ENCODE measurements at regions of chr6 and their contacts with region 1.

Region 1: DNA sequence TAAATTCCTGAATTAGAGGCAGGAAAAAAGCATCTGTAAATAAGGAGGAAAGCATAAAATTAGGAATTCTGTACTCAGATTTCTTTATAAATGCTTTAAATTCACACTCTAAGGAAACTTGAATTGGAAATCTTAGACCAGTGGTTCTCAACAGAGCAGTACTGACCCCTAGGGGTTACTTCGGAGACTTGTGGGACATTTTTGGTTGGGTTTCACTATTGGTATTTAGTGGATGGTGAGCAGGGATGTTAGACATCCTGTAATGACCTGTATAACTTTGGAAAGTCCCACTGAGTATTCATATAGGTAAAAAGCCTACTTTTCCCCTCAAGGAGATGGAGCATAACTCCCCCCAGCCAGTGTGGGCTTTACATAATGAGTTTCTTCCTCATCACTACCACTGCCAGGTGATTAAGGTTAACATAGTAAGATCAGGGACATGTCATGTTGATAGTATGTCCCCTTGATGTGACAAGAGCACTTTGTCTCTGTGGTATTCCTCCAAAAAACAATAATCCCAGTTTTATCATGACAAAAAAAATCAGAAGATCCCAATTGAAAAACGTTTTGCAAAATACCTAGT is 31.0 kb downstream of the GLO1 start:
- DNase-seq: peak in 7 of 9 donors; percentile 19 to 41 (median 32)
- ATAC-seq: peak; percentile 84
- H3K4me3 ChIP-seq: no peak overlapping the region
- H3K4me3 Mint-ChIP-seq: no peak overlapping the region
- H3K27ac ChIP-seq: no peak overlapping the region
- H3K27ac Mint-ChIP-seq: no peak overlapping the region
- H3K4me1 ChIP-seq: peaks cover 0 to 4% of the 10 kb centered on the region in 2 donors
- H3K4me1 Mint-ChIP-seq: peaks cover 6 to 32% (median 13%) of the 10 kb centered on the region in 7 donors
- H3K27me3 ChIP-seq: no peaks in the 10 kb centered on the region
- H3K27me3 Mint-ChIP-seq: no peaks in the 10 kb centered on the region

Region 2: GRCh38 chr6:37381579-37381978 is 1290.4 kb before region 1 on chr6:
- CTCF ChIA-PET with region 1: no interaction called
- POLR2A ChIA-PET with region 1: no interaction called
- intact Hi-C with region 1: loop called in 1 of 2 experiments (anchors 5 kb)
- DNase-seq: peak in 7 of 9 donors; percentile 18 to 48 (median 35)
- ATAC-seq: peak; percentile 61
- H3K4me3 ChIP-seq: no peak overlapping the region
- H3K4me3 Mint-ChIP-seq: no peak overlapping the region
- H3K27ac ChIP-seq: no peak overlapping the region
- H3K27ac Mint-ChIP-seq: peak overlapping the region in 1 of 9 donors; percentile 19
- H3K4me1 ChIP-seq: no peaks in the 10 kb centered on the region
- H3K4me1 Mint-ChIP-seq: peaks cover 0 to 3% (median 0%) of the 10 kb centered on the region in 7 donors
- H3K27me3 ChIP-seq: no peaks in the 10 kb centered on the region
- H3K27me3 Mint-ChIP-seq: no peaks in the 10 kb centered on the region

Region 3: DNA sequence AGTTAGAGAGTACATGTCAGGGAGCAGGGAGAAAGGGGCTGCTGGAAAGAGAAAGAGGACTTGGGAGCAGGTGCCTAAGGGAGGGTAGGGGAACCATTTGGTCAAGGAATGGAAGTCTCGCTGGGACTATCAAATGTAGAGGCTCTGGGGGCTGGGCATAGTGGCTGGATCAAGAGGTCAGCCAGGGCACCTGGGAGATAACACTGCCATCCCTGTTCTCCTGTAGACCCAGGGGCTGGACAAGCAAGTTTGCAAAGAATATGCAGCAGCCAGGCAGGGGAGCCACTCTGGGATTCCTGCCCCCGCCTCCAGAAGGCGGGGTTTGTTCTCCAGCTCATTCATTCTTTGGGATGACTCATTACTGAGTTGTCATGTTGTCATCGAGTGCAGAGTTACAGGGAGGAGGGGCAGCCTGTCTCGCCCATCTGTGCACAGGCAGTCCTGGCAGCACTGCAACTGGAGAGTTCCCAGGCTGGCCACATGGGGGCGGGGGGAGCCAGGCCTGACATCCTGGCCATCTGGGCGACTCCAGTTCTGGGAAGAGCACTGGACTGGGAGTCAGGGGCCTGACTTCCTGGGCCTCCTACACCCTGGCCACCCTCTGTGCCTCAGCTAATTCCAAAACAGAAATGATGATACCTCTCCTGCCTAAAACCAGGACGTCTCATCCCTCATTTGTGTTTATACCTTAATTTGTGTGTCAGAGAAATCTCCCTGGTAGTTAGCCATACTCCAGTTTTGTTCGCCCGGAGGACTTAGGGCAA is 880.6 kb before region 1 on chr6:
- CTCF ChIA-PET with region 1: no interaction called
- POLR2A ChIA-PET with region 1: no interaction called
- intact Hi-C with region 1: loop called in 1 of 2 experiments (anchors 10 kb)
- DNase-seq: peak; percentile 29 to 83 (median 59)
- ATAC-seq: peak; percentile 99
- H3K4me3 ChIP-seq: no peak overlapping the region
- H3K4me3 Mint-ChIP-seq: no peak overlapping the region
- H3K27ac ChIP-seq: no peak overlapping the region
- H3K27ac Mint-ChIP-seq: no peak overlapping the region
- H3K4me1 ChIP-seq: no peaks in the 10 kb centered on the region
- H3K4me1 Mint-ChIP-seq: peaks cover 0 to 11% (median 0%) of the 10 kb centered on the region in 7 donors
- H3K27me3 ChIP-seq: no peaks in the 10 kb centered on the region
- H3K27me3 Mint-ChIP-seq: peaks cover 0 to 10% (median 0%) of the 10 kb centered on the region in 5 donors

Region 4: DNA sequence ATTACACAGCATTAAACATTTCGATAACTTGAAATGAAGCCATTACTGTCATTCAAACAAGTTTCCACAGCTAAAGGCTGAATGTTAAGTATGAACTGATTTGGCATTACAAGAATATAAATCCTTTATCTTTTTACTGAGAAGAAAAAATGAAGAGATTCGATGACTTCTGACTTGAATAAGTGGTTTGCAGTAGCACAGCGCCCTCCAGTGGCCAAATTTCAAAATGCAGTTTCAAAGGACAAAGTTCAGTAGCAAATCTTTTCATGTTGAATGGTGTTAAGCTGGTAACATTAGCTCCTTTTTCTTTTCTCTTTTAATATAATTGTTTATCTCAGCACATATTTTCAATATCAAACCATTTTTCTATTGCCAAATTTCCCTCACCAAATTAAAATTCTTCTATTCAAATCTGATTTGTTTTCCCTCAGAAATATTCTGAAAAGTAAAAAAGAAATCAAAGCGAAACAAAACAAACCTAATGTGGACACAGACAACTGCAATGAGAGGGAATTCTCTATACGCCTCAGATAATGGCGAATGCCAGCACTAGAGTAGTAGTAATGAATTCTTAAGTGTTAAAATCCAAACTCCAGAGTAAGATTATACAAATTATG is 177.9 kb before region 1 on chr6:
- CTCF ChIA-PET with region 1: no interaction called
- POLR2A ChIA-PET with region 1: no interaction called
- intact Hi-C with region 1: loop called (anchors 1 kb)
- DNase-seq: peak; percentile 36 to 78 (median 68)
- ATAC-seq: peak; percentile 70
- H3K4me3 ChIP-seq: no peak overlapping the region
- H3K4me3 Mint-ChIP-seq: no peak overlapping the region
- H3K27ac ChIP-seq: no peak overlapping the region
- H3K27ac Mint-ChIP-seq: no peak overlapping the region
- H3K4me1 ChIP-seq: no peaks in the 10 kb centered on the region
- H3K4me1 Mint-ChIP-seq: peaks cover 0 to 5% (median 4%) of the 10 kb centered on the region in 7 donors
- H3K27me3 ChIP-seq: no peaks in the 10 kb centered on the region
- H3K27me3 Mint-ChIP-seq: no peaks in the 10 kb centered on the region

Region 5: DNA sequence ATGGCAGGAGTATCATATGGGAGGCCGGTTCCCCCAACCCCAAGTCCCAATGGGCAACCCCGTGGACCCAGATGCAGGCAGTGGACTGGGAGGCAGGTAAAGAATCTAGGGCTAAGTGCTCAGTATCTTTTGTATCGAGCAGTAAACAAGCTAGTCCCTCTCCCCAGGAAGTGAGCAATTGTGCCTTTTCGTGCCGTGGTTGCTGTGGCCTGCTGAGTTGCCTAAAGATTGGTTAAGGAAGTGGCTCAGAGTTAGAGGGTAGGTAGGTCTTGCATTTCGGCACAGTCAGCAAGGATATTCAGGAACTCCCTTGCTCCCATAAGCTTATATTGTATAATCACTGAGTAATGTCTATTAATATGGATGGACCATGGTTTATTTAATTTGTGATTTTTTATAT is 41.8 kb after region 1 on chr6:
- CTCF ChIA-PET with region 1: interaction called, 5 read pairs
- POLR2A ChIA-PET with region 1: no interaction called
- intact Hi-C with region 1: loop called in 1 of 2 experiments (anchors 5 kb)
- DNase-seq: peak in 2 of 9 donors; percentile 7 to 65
- ATAC-seq: peak; percentile 81
- H3K4me3 ChIP-seq: no peak overlapping the region
- H3K4me3 Mint-ChIP-seq: peak overlapping the region in 2 of 10 donors; percentile 67 to 83
- H3K27ac ChIP-seq: no peak overlapping the region
- H3K27ac Mint-ChIP-seq: peak overlapping the region in 1 of 9 donors; percentile 96
- H3K4me1 ChIP-seq: peaks cover 5 to 14% of the 10 kb centered on the region in 2 donors
- H3K4me1 Mint-ChIP-seq: peaks cover 11 to 43% (median 20%) of the 10 kb centered on the region in 7 donors
- H3K27me3 ChIP-seq: peaks cover 0 to 6% of the 10 kb centered on the region in 2 donors
- H3K27me3 Mint-ChIP-seq: peaks cover 20 to 51% (median 33%) of the 10 kb centered on the region in 5 donors

Region 6: GRCh38 chr6:38813041-38813823 is 141.3 kb after region 1 on chr6:
- CTCF ChIA-PET with region 1: no interaction called
- POLR2A ChIA-PET with region 1: no interaction called
- intact Hi-C with region 1: no loop called
- DNase-seq: no peak
- ATAC-seq: no peak
- H3K4me3 ChIP-seq: no peak overlapping the region
- H3K4me3 Mint-ChIP-seq: no peak overlapping the region
- H3K27ac ChIP-seq: no peak overlapping the region
- H3K27ac Mint-ChIP-seq: no peak overlapping the region
- H3K4me1 ChIP-seq: no peaks in the 10 kb centered on the region
- H3K4me1 Mint-ChIP-seq: no peaks in the 10 kb centered on the region
- H3K27me3 ChIP-seq: peaks cover 0 to 5% of the 10 kb centered on the region in 2 donors
- H3K27me3 Mint-ChIP-seq: peaks cover 23 to 67% (median 57%) of the 10 kb centered on the region in 5 donors